Endothelial cell of umbilical vein (primary cell): ENCODE measurements at regions of chr1 and their contacts with region 1.

Region 1: DNA sequence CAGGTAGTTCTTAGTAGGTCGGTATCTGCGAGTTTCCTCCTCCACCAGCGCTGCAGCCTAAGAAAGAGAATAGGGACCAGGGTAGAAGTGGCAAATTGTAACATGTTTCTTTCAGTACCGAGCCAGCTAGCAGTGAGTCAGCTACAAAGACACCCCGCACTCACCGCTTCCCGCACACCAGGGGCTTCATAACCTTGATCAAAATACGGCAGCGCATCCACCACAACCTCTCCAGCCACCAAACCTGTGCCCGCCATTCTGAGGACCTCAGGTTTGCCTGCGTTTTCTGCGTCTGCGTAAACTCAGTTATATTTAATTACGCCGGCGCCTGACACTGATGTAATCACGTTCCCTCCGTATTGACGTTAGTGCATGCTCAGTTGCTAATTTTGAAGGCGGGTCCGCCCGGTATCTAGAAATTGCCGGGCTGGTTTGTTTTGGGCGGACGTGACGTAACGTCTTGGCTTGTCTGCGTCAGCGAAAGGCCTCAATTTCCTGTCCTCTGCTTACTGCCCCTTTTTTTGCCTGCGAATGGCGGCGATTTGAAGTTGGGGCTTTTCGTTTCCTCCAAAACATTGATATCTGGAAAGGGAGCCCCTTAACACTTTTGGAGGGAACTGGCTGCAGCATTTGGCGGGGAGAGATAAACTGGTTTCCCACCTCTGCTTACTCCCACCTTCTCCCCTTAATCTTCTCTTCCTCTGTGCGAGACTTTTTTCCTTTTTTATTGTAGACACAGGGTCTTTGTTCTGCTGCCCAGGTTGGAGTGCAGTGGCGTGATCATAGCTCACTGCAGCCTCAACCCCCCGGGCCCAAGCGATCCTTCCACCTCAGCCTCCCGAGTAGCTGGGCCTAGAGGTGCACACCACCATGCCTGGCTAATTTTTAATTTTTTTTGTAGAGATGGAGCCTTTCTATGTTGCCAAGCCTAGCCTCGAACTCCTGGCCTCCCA is at the start of gene BCAS2:
- DNase-seq: peak; percentile 98
- H3K4me3 ChIP-seq: peak within 1 kb of the TSS; percentile 66 to 96 (median 85)
- H3K27ac ChIP-seq: peak within 1 kb of the TSS; percentile 68
- H3K4me1 ChIP-seq: peaks cover 7% of the 10 kb centered on the region
- H3K27me3 ChIP-seq: no peaks in the 10 kb centered on the region
- CTCF ChIP-seq: no peak
- POLR2A ChIP-seq: peak; percentile 93
- total RNA-seq, gene BCAS2: 41.7 and 43.5 TPM in 2 replicates

Region 2: DNA sequence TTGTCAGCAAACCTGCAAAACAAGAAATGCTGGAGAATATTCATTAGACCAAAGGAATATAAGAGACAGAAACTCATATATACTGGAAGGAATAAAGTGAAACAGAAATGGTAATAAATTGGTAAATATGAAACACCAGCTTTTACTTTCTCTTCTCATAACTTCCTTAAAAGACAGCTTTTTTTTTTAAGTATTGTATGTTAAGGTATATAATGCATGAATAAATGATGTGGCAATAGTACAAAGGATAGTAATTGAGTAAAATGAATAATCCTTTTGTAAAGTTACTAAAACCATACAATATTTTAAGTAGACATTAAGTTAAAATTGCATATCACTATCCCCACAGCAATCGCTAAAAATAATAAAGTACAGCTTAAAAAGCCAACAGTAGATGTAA is 135.4 kb before region 1 on chr1:
- CTCF ChIA-PET with region 1: no interaction called
- POLR2A ChIA-PET with region 1: no interaction called
- dilution Hi-C with region 1: no loop called
- intact Hi-C with region 1: loop called (anchors 10 kb)
- DNase-seq: no peak
- H3K4me3 ChIP-seq: no peak overlapping the region
- H3K27ac ChIP-seq: no peak overlapping the region
- H3K4me1 ChIP-seq: peaks cover 24% of the 10 kb centered on the region
- H3K27me3 ChIP-seq: no peaks in the 10 kb centered on the region
- CTCF ChIP-seq: no peak
- POLR2A ChIP-seq: no peak

Region 3: DNA sequence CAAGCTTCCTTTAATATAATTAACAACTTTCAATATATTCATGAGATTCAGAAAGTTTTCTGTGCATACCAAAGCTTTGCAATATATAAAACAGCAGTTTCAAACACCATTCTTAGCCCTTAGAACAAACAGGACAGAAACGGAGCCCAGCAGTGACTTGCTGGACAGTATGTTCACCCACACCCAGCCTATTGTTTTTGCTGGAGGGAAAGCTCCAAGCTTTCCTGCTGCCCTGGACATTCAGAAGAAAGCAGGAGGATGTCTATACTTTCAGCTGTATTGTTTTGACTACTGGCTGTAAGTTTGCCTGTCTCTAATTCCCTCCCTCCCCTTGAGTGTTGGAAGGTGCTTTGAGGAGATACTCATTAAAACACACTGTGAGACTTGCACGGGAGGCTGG is 78.6 kb after region 1 on chr1:
- CTCF ChIA-PET with region 1: no interaction called
- POLR2A ChIA-PET with region 1: no interaction called
- dilution Hi-C with region 1: no loop called
- intact Hi-C with region 1: no loop called
- DNase-seq: no peak
- H3K4me3 ChIP-seq: no peak overlapping the region
- H3K27ac ChIP-seq: no peak overlapping the region
- H3K4me1 ChIP-seq: no peaks in the 10 kb centered on the region
- H3K27me3 ChIP-seq: peaks cover 0 to 3% of the 10 kb centered on the region in 2 experiments
- CTCF ChIP-seq: no peak
- POLR2A ChIP-seq: no peak

Region 4: DNA sequence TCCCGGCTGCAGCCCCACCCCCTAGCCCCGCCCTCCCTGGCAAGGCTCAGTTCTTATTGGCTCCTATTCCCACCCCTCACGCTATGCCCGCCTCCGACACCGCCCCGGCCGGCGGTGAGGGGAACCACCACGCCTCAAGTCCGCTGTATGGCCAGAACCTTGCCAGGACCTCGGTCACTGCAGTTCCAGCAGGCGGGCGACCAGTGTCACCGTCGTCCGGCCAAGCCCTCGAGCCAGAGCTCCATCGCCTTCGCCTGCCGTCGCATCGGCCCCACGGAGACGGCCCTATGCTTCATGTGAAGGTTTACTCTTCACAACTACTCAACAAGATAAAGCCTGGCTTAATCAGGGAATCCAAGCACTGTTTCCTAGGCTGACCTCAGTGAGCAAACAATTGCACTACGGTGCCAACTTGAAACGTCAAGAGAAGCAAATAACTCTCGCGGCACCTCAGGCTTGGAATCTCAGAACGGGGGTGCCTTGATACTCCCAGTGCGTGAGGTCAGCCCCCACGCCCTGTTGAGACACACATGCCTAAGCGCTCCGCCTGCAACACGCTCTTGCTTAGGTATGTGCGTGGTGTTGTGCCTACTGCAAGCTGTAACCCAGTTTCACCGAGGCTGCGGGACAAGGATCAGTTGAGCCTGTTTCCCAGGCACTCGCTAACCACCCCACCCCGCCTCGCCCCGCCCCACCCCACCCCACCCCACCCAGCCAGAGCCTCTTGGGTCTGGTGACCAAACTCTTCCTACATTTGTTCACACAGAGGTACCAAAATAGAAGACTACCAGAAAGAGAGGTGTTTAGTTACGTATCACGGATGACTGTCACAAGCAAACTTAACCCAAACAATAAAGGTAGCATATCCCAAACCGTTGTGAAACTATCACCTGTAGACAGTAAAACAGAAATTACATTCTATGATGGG is 88.7 kb after region 1 on chr1:
- CTCF ChIA-PET with region 1: no interaction called
- POLR2A ChIA-PET with region 1: no interaction called
- dilution Hi-C with region 1: no loop called
- intact Hi-C with region 1: loop called (anchors 2 kb)
- DNase-seq: peak; percentile 91
- H3K4me3 ChIP-seq: peak overlapping the region in 2 of 3 experiments; percentile 49 to 62
- H3K27ac ChIP-seq: no peak overlapping the region
- H3K4me1 ChIP-seq: peaks cover 11% of the 10 kb centered on the region
- H3K27me3 ChIP-seq: peaks cover 10 to 17% of the 10 kb centered on the region in 2 experiments
- CTCF ChIP-seq: no peak
- POLR2A ChIP-seq: no peak

Region 5: GRCh38 chr1:114723457-114723856 is 141.8 kb after region 1 on chr1:
- CTCF ChIA-PET with region 1: no interaction called
- POLR2A ChIA-PET with region 1: no interaction called
- dilution Hi-C with region 1: no loop called
- intact Hi-C with region 1: no loop called
- DNase-seq: no peak
- H3K4me3 ChIP-seq: no peak overlapping the region
- H3K27ac ChIP-seq: no peak overlapping the region
- H3K4me1 ChIP-seq: no peaks in the 10 kb centered on the region
- H3K27me3 ChIP-seq: no peaks in the 10 kb centered on the region
- CTCF ChIP-seq: no peak
- POLR2A ChIP-seq: no peak